Activated CD4-positive, alpha-beta T cell treated with anti-CD3 and anti-CD28 coated beads for 36 hours (primary cell): ENCODE measurements at regions of chr5 and their contacts with region 1.

Region 1: GRCh38 chr5:115460472-115460871 is 84.1 kb downstream of the FEM1C start:
- DNase-seq: peak; percentile 38
- ATAC-seq: peak; percentile 66
- H3K4me3 Mint-ChIP-seq: no peak overlapping the region
- H3K27ac Mint-ChIP-seq: no peak overlapping the region
- H3K4me1 Mint-ChIP-seq: no peaks in the 10 kb centered on the region
- H3K27me3 Mint-ChIP-seq: peaks cover 27% of the 10 kb centered on the region

Region 2: DNA sequence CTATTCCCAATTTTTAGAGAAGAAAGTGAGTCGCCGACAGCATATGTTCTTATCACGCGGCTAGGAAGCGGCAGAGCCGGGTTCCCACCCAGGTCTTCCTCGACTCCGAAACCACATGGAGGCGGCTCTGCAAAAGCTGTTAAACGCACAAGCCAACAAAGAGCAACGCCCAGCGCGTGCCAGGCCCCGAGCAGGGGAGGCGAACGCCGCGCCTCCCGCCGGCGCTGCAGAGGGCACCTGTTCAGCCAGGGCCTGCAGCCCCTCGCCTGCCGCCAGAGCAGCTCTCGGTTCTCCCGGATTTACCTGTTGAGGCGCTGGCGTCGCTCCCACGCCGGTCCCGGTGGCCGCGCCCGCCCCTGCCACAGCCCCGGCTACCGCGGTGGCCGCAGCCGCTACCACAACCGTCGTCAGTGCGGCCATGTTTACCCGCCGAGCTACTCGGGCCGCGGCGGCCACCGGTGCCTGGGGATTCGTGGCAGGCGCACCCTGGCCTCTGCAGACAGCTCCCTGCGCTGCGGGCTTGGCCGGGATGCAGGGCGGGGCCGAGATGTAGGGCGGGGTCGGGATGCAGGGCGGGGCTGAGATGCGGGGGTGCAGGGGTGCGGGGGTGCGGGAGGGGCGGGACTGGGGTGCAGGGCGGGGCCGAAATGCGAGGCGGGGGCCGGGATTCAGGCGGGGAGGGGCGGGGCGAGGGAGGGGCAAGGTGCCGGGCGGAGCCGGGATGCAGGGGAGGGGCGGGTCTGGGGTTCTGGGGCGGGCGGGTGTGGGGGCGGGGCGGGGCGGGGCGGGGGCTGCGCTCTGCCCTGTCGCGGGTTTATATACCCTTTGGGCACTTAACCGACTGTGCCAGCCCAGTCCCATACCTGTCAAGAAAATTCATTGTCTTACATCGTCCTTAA is 164.1 kb before region 1 on chr5 and contains the start of gene CCDC112:
- CTCF ChIA-PET with region 1: no interaction called
- POLR2A ChIA-PET with region 1: no interaction called
- intact Hi-C with region 1: loop called in 1 of 2 experiments (anchors 5 kb)
- DNase-seq: peak; percentile 94
- ATAC-seq: peak; percentile 93
- H3K4me3 Mint-ChIP-seq: peak within 1 kb of the TSS; percentile 77
- H3K27ac Mint-ChIP-seq: peak within 1 kb of the TSS; percentile 44
- H3K4me1 Mint-ChIP-seq: peaks cover 7% of the 10 kb centered on the region
- H3K27me3 Mint-ChIP-seq: peaks cover 3% of the 10 kb centered on the region
- total RNA-seq, gene CCDC112: 2.2 to 4.1 TPM

Region 3: GRCh38 chr5:115333164-115333563 is 127.3 kb before region 1 on chr5:
- CTCF ChIA-PET with region 1: no interaction called
- POLR2A ChIA-PET with region 1: no interaction called
- intact Hi-C with region 1: loop called in 1 of 2 experiments (anchors 5 kb)
- DNase-seq: peak; percentile 7
- ATAC-seq: peak; percentile 42
- H3K4me3 Mint-ChIP-seq: no peak overlapping the region
- H3K27ac Mint-ChIP-seq: no peak overlapping the region
- H3K4me1 Mint-ChIP-seq: peaks cover 9% of the 10 kb centered on the region
- H3K27me3 Mint-ChIP-seq: peaks cover 17% of the 10 kb centered on the region

Region 4: GRCh38 chr5:115415143-115415491 is 45.4 kb before region 1 on chr5:
- CTCF ChIA-PET with region 1: interaction called, 4 read pairs
- POLR2A ChIA-PET with region 1: no interaction called
- intact Hi-C with region 1: loop called in 1 of 2 experiments (anchors 1 kb)
- DNase-seq: peak; percentile 46
- ATAC-seq: peak; percentile 81
- H3K4me3 Mint-ChIP-seq: no peak overlapping the region
- H3K27ac Mint-ChIP-seq: no peak overlapping the region
- H3K4me1 Mint-ChIP-seq: peaks cover 7% of the 10 kb centered on the region
- H3K27me3 Mint-ChIP-seq: peaks cover 8% of the 10 kb centered on the region

Region 5: GRCh38 chr5:115435778-115436712 is 24.4 kb before region 1 on chr5:
- CTCF ChIA-PET with region 1: no interaction called
- POLR2A ChIA-PET with region 1: no interaction called
- intact Hi-C with region 1: no loop called
- DNase-seq: no peak
- ATAC-seq: no peak
- H3K4me3 Mint-ChIP-seq: no peak overlapping the region
- H3K27ac Mint-ChIP-seq: no peak overlapping the region
- H3K4me1 Mint-ChIP-seq: peaks cover 2% of the 10 kb centered on the region
- H3K27me3 Mint-ChIP-seq: peaks cover 26% of the 10 kb centered on the region

Region 6: GRCh38 chr5:115487756-115488155 is 27.3 kb after region 1 on chr5:
- CTCF ChIA-PET with region 1: no interaction called
- POLR2A ChIA-PET with region 1: interaction called, 4 read pairs
- intact Hi-C with region 1: loop called (anchors 1 kb)
- DNase-seq: peak; percentile 45
- ATAC-seq: peak; percentile 94
- H3K4me3 Mint-ChIP-seq: no peak overlapping the region
- H3K27ac Mint-ChIP-seq: no peak overlapping the region
- H3K4me1 Mint-ChIP-seq: peaks cover 28% of the 10 kb centered on the region
- H3K27me3 Mint-ChIP-seq: peaks cover 9% of the 10 kb centered on the region

Region 7: GRCh38 chr5:115544436-115545350 is 84.2 kb after region 1 on chr5 and contains the start of gene FEM1C:
- CTCF ChIA-PET with region 1: interaction called, 4 read pairs
- POLR2A ChIA-PET with region 1: no interaction called
- intact Hi-C with region 1: loop called (anchors 1 to 2 kb)
- DNase-seq: peak; percentile 100
- ATAC-seq: peak; percentile 93
- H3K4me3 Mint-ChIP-seq: peak within 1 kb of the TSS; percentile 96
- H3K27ac Mint-ChIP-seq: peak within 1 kb of the TSS; percentile 97
- H3K4me1 Mint-ChIP-seq: peaks cover 41% of the 10 kb centered on the region
- H3K27me3 Mint-ChIP-seq: no peaks in the 10 kb centered on the region
- total RNA-seq, gene FEM1C: 15.8 to 15.9 TPM

Region 8: GRCh38 chr5:116076496-116076895 is 616.0 kb after region 1 on chr5:
- CTCF ChIA-PET with region 1: no interaction called
- POLR2A ChIA-PET with region 1: no interaction called
- intact Hi-C with region 1: loop called in 1 of 2 experiments (anchors 10 kb)
- DNase-seq: peak; percentile 26
- ATAC-seq: peak; percentile 91
- H3K4me3 Mint-ChIP-seq: no peak overlapping the region
- H3K27ac Mint-ChIP-seq: peak overlapping the region; percentile 56
- H3K4me1 Mint-ChIP-seq: peaks cover 26% of the 10 kb centered on the region
- H3K27me3 Mint-ChIP-seq: peaks cover 20% of the 10 kb centered on the region